MCF 10A (cell line): ENCODE measurements at regions of chr15 and their contacts with region 1.

Region 1: GRCh38 chr15:51829360-51830275 is at the start of gene TMOD3:
- DNase-seq: peak; percentile 92
- H3K4me3 Mint-ChIP-seq: peak within 1 kb of the TSS; percentile 96
- H3K27ac Mint-ChIP-seq: peak within 1 kb of the TSS; percentile 96
- H3K4me1 Mint-ChIP-seq: peaks cover 57% of the 10 kb centered on the region
- H3K27me3 Mint-ChIP-seq: no peaks in the 10 kb centered on the region
- CTCF ChIP-seq: no peak
- total RNA-seq, gene TMOD3: 93.5 and 94.6 TPM in 2 replicates

Region 2: GRCh38 chr15:51814606-51815005 is 15.0 kb before region 1 on chr15:
- CTCF ChIA-PET with region 1: interaction called, 5 read pairs
- POLR2A ChIA-PET with region 1: interaction called, 10 read pairs
- intact Hi-C with region 1: no loop called
- DNase-seq: no peak
- H3K4me3 Mint-ChIP-seq: no peak overlapping the region
- H3K27ac Mint-ChIP-seq: no peak overlapping the region
- H3K4me1 Mint-ChIP-seq: no peaks in the 10 kb centered on the region
- H3K27me3 Mint-ChIP-seq: no peaks in the 10 kb centered on the region
- CTCF ChIP-seq: no peak

Region 3: DNA sequence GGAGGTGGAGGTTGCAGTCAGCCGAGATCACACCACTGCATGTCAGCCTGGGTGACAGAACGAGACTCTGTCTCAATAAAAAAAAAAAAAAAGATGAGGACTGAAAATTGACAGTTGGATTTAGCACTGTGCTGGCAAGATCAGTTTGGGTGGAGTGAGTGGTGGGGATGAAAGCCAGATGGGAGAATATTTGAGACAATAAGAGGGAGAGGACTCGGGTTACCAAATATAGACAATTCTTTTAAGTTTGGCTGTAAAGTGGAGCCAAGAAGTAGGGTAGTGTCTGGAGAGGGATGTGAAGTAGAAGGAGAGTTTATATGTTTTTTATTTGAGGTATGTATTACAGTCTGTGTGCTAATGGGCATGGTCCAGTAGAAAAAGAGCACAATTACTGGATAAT is 20.2 kb after region 1 on chr15:
- CTCF ChIA-PET with region 1: interaction called, 3 read pairs
- POLR2A ChIA-PET with region 1: interaction called, 51 read pairs
- intact Hi-C with region 1: no loop called
- DNase-seq: no peak
- H3K4me3 Mint-ChIP-seq: no peak overlapping the region
- H3K27ac Mint-ChIP-seq: peak overlapping the region; percentile 75
- H3K4me1 Mint-ChIP-seq: peaks cover 62% of the 10 kb centered on the region
- H3K27me3 Mint-ChIP-seq: no peaks in the 10 kb centered on the region
- CTCF ChIP-seq: no peak

Region 4: DNA sequence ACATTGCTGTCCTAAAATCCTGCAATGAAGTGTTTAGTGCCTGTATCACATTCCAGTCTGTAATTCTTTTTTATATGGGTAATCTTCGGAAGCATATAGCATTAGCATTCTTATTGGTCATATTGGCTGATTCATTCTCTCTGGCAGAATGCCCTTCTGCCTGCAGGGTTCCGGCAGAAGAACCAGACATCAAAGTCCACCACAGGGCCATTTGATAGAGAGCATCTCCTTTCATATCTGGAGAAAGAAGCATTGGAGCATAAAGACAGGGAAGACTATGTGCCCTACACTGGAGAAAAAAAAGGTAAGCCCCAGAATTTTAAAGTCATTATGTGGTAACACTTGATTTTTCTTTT is 39.4 kb after region 1 on chr15:
- CTCF ChIA-PET with region 1: interaction called, 3 read pairs
- POLR2A ChIA-PET with region 1: interaction called, 26 read pairs
- intact Hi-C with region 1: no loop called
- DNase-seq: peak; percentile 73
- H3K4me3 Mint-ChIP-seq: no peak overlapping the region
- H3K27ac Mint-ChIP-seq: peak overlapping the region; percentile 19
- H3K4me1 Mint-ChIP-seq: peaks cover 53% of the 10 kb centered on the region
- H3K27me3 Mint-ChIP-seq: no peaks in the 10 kb centered on the region
- CTCF ChIP-seq: no peak

Region 5: DNA sequence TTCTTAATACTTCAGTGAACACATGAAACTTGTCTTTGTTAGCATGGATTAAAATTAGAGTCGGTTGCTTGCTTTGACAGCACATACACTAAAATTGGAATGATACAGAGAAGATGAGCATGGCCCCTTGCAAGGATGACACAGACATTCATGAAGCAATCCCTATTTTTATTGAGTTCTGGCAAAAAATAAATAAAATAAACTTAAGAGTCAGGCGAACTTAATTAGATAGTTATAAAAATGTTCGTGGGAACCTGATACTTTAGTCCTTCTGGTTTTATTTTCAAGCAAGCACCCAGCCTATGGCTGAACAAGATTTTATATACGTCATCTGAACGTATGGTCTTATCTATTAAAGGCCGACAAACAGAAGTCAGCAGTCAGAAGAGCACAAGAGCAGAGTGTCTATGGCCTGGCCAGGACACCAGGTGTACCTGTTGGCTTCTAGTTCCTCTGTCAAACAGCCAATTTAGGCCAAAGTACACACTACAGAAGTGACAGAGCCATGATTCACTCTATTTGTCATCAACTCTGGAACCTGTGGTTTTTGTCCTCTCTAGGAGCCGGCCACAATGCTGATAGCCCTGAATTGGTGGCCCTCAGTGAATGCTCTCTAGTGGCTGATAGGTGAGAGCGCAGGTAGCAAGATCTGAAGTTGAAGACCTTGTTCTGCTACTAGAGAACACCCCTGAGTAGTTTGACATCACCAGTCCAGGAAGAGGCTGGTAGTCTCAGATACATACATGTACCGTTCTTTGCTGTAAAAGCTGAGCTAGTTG is 77.7 kb after region 1 on chr15:
- CTCF ChIA-PET with region 1: interaction called, 4 read pairs
- POLR2A ChIA-PET with region 1: no interaction called
- intact Hi-C with region 1: loop called (anchors 2 kb)
- DNase-seq: peak; percentile 71
- H3K4me3 Mint-ChIP-seq: no peak overlapping the region
- H3K27ac Mint-ChIP-seq: peak overlapping the region; percentile 23
- H3K4me1 Mint-ChIP-seq: peaks cover 19% of the 10 kb centered on the region
- H3K27me3 Mint-ChIP-seq: no peaks in the 10 kb centered on the region
- CTCF ChIP-seq: peak; percentile 13